ENCODE measurements at regions of chr2 and their contacts with region 1.

Region 1: DNA sequence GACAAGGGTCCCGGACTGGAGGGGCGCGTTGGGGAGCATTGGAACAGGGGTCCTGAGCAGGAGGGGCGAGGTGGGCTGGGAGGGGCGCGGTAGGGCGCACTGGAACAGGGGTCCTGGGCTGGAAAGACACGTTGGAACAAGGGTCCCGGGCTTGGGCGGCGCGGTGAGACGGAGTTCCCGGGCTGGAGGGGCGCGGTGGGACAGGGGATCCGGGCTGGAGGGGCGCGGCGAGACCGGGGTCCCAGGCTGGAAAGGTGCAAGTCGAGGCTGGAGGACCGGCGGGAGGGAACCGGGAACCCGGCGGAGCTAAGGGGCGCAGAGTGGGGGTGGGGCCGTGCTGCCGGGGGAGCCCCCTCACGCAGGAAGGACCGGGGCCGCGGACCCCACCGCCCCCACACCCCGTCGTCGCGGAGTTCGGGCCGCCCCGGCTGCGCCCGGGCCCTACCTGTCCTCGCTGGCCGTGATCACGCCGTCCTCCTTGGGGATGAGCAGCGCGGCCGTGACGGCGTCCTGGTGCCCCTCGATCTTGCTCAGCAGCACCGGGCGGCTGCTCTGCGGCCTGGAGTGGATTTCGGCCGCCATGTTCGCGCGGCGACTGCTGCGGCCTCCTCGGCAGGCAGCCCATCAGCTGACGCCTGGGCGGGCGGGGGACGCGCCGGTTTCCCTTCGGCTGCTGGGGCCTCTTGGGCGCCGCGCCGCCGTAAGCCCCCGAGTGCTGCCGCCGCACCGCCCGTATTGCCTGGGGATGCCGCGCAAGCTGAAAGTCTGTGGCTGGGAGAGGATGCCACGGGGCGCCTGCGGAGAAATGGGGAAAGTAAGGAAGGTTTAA is at the start of gene WDFY1:
- DNase-seq: peak; percentile 87
- H3K4me3 Mint-ChIP-seq: peak within 1 kb of the TSS; percentile 91
- H3K27ac Mint-ChIP-seq: peak within 1 kb of the TSS; percentile 92
- H3K4me1 Mint-ChIP-seq: peaks cover 60% of the 10 kb centered on the region
- H3K27me3 Mint-ChIP-seq: no peaks in the 10 kb centered on the region

Region 2: DNA sequence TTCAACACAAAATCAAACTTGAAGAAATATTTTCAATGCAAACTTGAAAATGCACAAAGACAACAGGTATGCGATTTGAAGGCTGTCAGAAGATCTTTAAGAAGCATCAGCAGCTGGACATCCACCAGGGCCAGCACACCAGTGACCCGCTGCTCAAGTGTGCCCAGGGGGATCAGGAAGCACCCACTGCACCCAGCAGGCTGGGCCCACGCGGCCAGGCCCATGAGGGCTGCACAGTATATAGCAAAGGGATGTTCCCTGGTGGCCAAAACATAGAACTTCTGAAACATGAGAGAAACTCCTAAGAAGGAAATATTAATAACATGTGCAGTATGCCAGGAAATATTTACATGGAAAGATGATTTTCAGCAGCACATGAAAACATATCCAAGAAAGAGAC is 24.8 kb before region 1 on chr2:
- CTCF ChIA-PET with region 1: no interaction called
- DNase-seq: no peak
- H3K4me3 Mint-ChIP-seq: no peak overlapping the region
- H3K27ac Mint-ChIP-seq: no peak overlapping the region
- H3K4me1 Mint-ChIP-seq: peaks cover 5% of the 10 kb centered on the region
- H3K27me3 Mint-ChIP-seq: no peaks in the 10 kb centered on the region

Region 3: GRCh38 chr2:223957092-223957851 is 12.4 kb after region 1 on chr2 and contains the start of gene MRPL44:
- CTCF ChIA-PET with region 1: interaction called, 10 read pairs
- DNase-seq: peak; percentile 96
- H3K4me3 Mint-ChIP-seq: peak within 1 kb of the TSS; percentile 90
- H3K27ac Mint-ChIP-seq: peak within 1 kb of the TSS; percentile 95
- H3K4me1 Mint-ChIP-seq: peaks cover 71% of the 10 kb centered on the region
- H3K27me3 Mint-ChIP-seq: peaks cover 6% of the 10 kb centered on the region